HepG2 (cell line): ENCODE measurements at regions of chr9 and their contacts with region 1.

Region 1: GRCh38 chr9:35603987-35604577 is 980 bp upstream of the TESK1 start:
- DNase-seq: peak; percentile 98
- ATAC-seq: peak; percentile 91
- H3K4me3 ChIP-seq: peak overlapping the region; percentile 75 to 92 (median 90)
- H3K27ac ChIP-seq: peak overlapping the region; percentile 81
- H3K4me1 ChIP-seq: peaks cover 41% of the 10 kb centered on the region
- H3K27me3 ChIP-seq: no peaks in the 10 kb centered on the region; a peak in 2 of 5 replicates
- CTCF ChIP-seq: peak; percentile 97
- EP300 ChIP-seq: no peak
- POLR2A ChIP-seq: peak; percentile 69 to 88
- RAD21 ChIP-seq: peak; percentile 54; the same call in 1 of the 2 replicates

Region 2: GRCh38 chr9:35489313-35490154 is 114.5 kb before region 1 on chr9 and contains the start of gene RUSC2:
- CTCF ChIA-PET with region 1: no interaction called
- POLR2A ChIA-PET with region 1: interaction called, 5 read pairs
- in situ Hi-C with region 1: no loop called
- intact Hi-C with region 1: loop called (anchors 5 kb)
- DNase-seq: peak; percentile 75
- ATAC-seq: peak; percentile 84
- H3K4me3 ChIP-seq: peak within 1 kb of the TSS; percentile 76 to 97 (median 87)
- H3K27ac ChIP-seq: peak within 1 kb of the TSS; percentile 71
- H3K4me1 ChIP-seq: peaks cover 30% of the 10 kb centered on the region
- H3K27me3 ChIP-seq: no peaks in the 10 kb centered on the region
- CTCF ChIP-seq: peak; percentile 77
- EP300 ChIP-seq: peak; percentile 3 to 26; a peak in 1 of 4 replicates
- POLR2A ChIP-seq: peak; percentile 61 to 71
- RAD21 ChIP-seq: peak; percentile 46; the same call in 1 of the 2 replicates
- total RNA-seq, gene RUSC2: 2.3 and 3.3 TPM in 2 replicates

Region 3: GRCh38 chr9:35552837-35553236 is 51.2 kb before region 1 on chr9:
- CTCF ChIA-PET with region 1: no interaction called
- POLR2A ChIA-PET with region 1: no interaction called
- in situ Hi-C with region 1: no loop called
- intact Hi-C with region 1: no loop called
- DNase-seq: no peak
- ATAC-seq: no peak
- H3K4me3 ChIP-seq: no peak overlapping the region
- H3K27ac ChIP-seq: no peak overlapping the region
- H3K4me1 ChIP-seq: peaks cover 11% of the 10 kb centered on the region
- H3K27me3 ChIP-seq: no peaks in the 10 kb centered on the region
- CTCF ChIP-seq: no peak
- EP300 ChIP-seq: no peak
- POLR2A ChIP-seq: no peak
- RAD21 ChIP-seq: no peak

Region 4: GRCh38 chr9:35563791-35564197 is 40.3 kb before region 1 on chr9:
- CTCF ChIA-PET with region 1: no interaction called
- POLR2A ChIA-PET with region 1: no interaction called
- in situ Hi-C with region 1: loop called (anchors 5 kb)
- intact Hi-C with region 1: loop called (anchors 5 kb)
- DNase-seq: peak; percentile 63
- ATAC-seq: peak; percentile 95
- H3K4me3 ChIP-seq: peak overlapping the region in 2 of 3 experiments; percentile 11 to 53; a peak in 2 of 6 replicates
- H3K27ac ChIP-seq: peak overlapping the region; percentile 17
- H3K4me1 ChIP-seq: peaks cover 14% of the 10 kb centered on the region
- H3K27me3 ChIP-seq: no peaks in the 10 kb centered on the region
- CTCF ChIP-seq: peak; percentile 23; the same call in 1 of the 2 replicates
- EP300 ChIP-seq: no peak
- POLR2A ChIP-seq: no peak
- RAD21 ChIP-seq: no peak

Region 5: DNA sequence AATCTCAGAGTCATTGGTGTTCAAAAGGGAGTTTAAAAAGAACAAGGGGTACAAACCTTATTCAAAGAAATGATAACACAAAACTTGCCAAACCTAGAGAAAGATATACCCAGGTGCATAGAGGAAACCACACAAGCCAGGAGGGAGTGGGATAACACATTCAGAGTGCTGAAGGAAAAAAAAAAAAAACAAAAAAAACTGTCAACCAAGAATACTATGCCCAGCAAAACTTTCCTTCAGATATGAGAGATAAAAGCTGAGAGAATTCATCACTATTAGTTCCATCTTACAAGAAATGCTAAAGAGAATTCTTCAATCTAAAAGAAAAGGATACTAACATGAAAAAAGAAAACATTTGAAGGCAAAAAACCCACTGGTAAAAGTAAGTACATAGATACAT is 10.5 kb before region 1 on chr9:
- CTCF ChIA-PET with region 1: no interaction called
- POLR2A ChIA-PET with region 1: no interaction called
- in situ Hi-C with region 1: no loop called
- intact Hi-C with region 1: no loop called
- DNase-seq: no peak
- ATAC-seq: no peak
- H3K4me3 ChIP-seq: no peak overlapping the region
- H3K27ac ChIP-seq: no peak overlapping the region
- H3K4me1 ChIP-seq: peaks cover 5% of the 10 kb centered on the region
- H3K27me3 ChIP-seq: no peaks in the 10 kb centered on the region
- CTCF ChIP-seq: no peak
- EP300 ChIP-seq: no peak
- POLR2A ChIP-seq: no peak
- RAD21 ChIP-seq: no peak

Region 6: GRCh38 chr9:35646533-35647265 is 42.6 kb after region 1 on chr9:
- CTCF ChIA-PET with region 1: interaction called, 4 read pairs
- POLR2A ChIA-PET with region 1: interaction called, 3 read pairs
- in situ Hi-C with region 1: no loop called
- intact Hi-C with region 1: loop called (anchors 1 kb)
- DNase-seq: peak; percentile 78
- ATAC-seq: peak; percentile 95
- H3K4me3 ChIP-seq: peak overlapping the region; percentile 70 to 83 (median 72)
- H3K27ac ChIP-seq: peak overlapping the region; percentile 67
- H3K4me1 ChIP-seq: peaks cover 55% of the 10 kb centered on the region
- H3K27me3 ChIP-seq: peaks cover 2 to 22% of the 10 kb centered on the region in 2 experiments; a peak in 3 of 5 replicates
- CTCF ChIP-seq: peak; percentile 98
- EP300 ChIP-seq: no peak
- POLR2A ChIP-seq: peak; percentile 64 to 81
- RAD21 ChIP-seq: peak; percentile 93